Activated CD4-positive, alpha-beta memory T cell treated with anti-CD3 and anti-CD28 coated beads for 36 hours (primary cell): ENCODE measurements at regions of chr15 and their contacts with region 1.

Region 1: DNA sequence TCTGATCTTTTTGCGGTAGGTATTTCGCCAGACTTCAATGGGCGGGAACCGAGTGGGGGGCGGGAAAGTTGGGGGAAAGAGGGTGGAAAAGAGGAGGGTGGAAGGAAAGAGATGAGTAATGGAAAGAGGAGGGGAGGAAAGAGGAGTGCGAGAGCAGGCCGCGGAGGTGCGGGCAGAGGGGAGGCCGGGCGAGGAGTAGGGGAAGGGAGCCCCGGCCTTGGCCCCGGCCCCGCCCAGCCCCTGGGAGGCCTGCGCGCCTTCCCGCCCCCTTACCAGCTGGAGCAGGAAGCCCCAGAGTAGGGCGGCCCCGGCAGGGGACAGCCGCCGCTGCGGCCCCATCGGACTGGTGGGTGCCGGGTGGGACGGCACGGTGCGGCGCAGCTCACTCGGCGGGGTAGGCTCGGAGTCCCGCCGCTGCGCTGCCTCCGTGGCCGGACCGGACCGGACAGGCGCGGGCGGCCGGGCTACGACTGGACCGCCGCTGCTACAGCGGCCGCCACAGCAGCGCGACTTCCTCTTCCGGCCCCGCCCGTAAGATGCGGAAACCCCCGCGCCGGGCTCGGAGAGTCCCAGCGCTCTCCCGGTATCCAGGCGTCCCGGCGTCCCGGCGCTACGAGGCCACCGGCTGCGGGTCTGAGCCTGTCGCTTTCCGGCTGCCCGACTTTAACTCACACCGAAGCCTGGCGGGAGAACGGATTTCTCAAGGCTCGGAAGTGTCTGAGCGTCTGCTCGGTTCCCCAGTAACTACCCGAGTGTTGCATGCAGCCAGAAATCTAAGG is at the start of gene SPPL2A:
- DNase-seq: peak; percentile 94
- H3K4me3 Mint-ChIP-seq: peak within 1 kb of the TSS; percentile 92
- H3K27ac Mint-ChIP-seq: peak within 1 kb of the TSS; percentile 93
- H3K4me1 Mint-ChIP-seq: peaks cover 56% of the 10 kb centered on the region
- H3K27me3 Mint-ChIP-seq: no peaks in the 10 kb centered on the region
- total RNA-seq, gene SPPL2A: 79.9 to 82.1 TPM

Region 2: DNA sequence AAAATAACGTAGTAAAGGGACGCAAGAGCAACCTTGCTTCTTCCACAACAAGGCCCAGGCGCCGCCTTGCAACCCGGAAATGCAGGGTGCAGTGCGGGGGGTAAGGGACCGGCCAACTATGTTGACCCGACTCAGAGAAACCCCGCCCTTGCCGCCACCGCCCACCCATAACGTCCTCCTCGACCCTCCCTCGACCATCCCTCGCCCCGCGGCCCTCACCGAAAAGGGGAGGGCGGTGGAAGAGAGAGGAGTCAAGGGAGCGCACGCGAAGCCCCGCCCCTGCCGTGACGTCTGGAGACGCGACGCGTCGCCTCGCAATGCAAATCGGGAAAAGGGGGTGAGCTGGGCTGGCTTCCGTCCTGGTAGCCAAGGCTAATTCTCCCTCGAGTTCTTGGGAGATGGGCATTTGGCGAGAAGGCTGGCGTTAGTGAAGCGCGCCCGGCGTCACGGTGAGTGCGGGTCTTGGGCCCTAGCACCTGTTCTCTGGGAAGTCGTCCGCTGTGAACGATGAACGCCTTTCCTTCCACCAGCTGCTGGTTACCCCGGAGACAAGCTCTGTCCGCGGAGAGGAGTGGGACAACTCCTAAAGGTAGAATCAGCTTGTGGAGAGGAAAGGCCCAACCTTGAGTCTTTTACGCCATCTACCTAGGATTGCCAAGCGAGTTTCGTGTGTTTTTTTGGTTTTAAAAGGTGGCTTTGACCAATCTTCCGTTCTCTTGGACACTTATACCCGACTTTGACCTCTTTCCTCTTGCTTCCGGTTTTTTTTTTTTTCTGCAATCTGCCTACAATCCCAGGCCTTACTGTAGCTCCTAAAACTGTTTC is 341.1 kb before region 1 on chr15 and contains the start of gene USP8:
- CTCF ChIA-PET with region 1: no interaction called
- POLR2A ChIA-PET with region 1: no interaction called
- intact Hi-C with region 1: loop called (anchors 10 kb)
- DNase-seq: peak; percentile 96
- H3K4me3 Mint-ChIP-seq: peak within 1 kb of the TSS; percentile 94
- H3K27ac Mint-ChIP-seq: peak within 1 kb of the TSS; percentile 82
- H3K4me1 Mint-ChIP-seq: peaks cover 29% of the 10 kb centered on the region
- H3K27me3 Mint-ChIP-seq: no peaks in the 10 kb centered on the region
- total RNA-seq, gene USP8: 43.4 to 46.0 TPM

Region 3: DNA sequence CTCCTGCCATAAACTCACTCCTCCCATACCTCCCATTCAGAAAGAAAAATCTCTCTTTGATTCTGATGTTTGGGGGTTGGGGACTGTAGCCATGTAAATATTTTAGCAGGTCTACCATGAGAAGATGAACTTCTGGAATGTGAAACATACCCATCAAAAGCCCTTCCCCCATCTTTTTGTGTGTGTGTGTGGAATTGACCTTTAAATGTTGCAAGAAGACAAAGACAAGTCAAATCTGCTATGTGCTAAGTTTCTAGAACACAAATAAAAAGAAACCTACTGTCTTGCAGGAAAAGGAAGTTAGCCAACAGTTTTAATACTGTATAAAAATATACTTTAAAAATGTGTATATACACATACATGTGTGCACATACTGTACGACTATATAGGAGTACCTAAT is 189.2 kb before region 1 on chr15:
- CTCF ChIA-PET with region 1: no interaction called
- POLR2A ChIA-PET with region 1: no interaction called
- intact Hi-C with region 1: no loop called
- DNase-seq: no peak
- H3K4me3 Mint-ChIP-seq: no peak overlapping the region
- H3K27ac Mint-ChIP-seq: no peak overlapping the region
- H3K4me1 Mint-ChIP-seq: no peaks in the 10 kb centered on the region
- H3K27me3 Mint-ChIP-seq: no peaks in the 10 kb centered on the region

Region 4: DNA sequence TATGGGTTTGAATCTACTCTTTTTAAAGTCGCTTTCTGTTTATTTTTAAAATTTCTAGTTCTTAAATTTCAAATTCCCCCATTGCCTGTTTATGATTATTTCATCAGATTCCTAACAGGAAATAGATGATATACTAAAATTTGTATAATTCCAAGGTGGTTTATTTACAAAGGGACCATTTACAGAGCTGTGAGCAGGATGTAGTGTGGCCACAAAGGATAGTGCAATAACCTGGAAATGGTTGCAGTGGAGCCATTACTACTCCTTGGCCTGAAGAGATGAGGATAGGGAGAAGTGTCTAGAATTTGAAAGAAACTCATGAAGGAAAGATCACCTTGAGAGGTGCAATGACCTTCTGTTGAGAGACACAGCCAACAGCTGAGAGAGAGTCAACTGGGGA is 84.6 kb after region 1 on chr15:
- CTCF ChIA-PET with region 1: no interaction called
- POLR2A ChIA-PET with region 1: no interaction called
- intact Hi-C with region 1: no loop called
- DNase-seq: no peak
- H3K4me3 Mint-ChIP-seq: no peak overlapping the region
- H3K27ac Mint-ChIP-seq: no peak overlapping the region
- H3K4me1 Mint-ChIP-seq: no peaks in the 10 kb centered on the region
- H3K27me3 Mint-ChIP-seq: no peaks in the 10 kb centered on the region